Activated CD4-positive, alpha-beta memory T cell treated with anti-CD3 and anti-CD28 coated beads, Interleukin-2, amount 10 ng/mL, durations not matched to agents 7 days and 5 days (primary cell): ENCODE measurements at regions of chr10 and their contacts with region 1.

Region 1: GRCh38 chr10:12348870-12349628 is at the start of gene CAMK1D:
- DNase-seq: peak; percentile 92
- H3K4me3 Mint-ChIP-seq: peak within 1 kb of the TSS; percentile 91
- H3K27ac Mint-ChIP-seq: peak within 1 kb of the TSS; percentile 96
- H3K4me1 Mint-ChIP-seq: peaks cover 49% of the 10 kb centered on the region
- H3K27me3 Mint-ChIP-seq: peaks cover 27% of the 10 kb centered on the region
- total RNA-seq, gene CAMK1D: 16.7 to 17.8 TPM

Region 2: GRCh38 chr10:12364559-12364958 is 15.5 kb after region 1 on chr10:
- CTCF ChIA-PET with region 1: interaction called, 3 read pairs
- POLR2A ChIA-PET with region 1: interaction called, 40 read pairs
- DNase-seq: no peak
- H3K4me3 Mint-ChIP-seq: no peak overlapping the region
- H3K27ac Mint-ChIP-seq: no peak overlapping the region
- H3K4me1 Mint-ChIP-seq: peaks cover 37% of the 10 kb centered on the region
- H3K27me3 Mint-ChIP-seq: no peaks in the 10 kb centered on the region